HCT116 (cell line): ENCODE measurements at regions of chr3 and their contacts with region 1.

Region 1: DNA sequence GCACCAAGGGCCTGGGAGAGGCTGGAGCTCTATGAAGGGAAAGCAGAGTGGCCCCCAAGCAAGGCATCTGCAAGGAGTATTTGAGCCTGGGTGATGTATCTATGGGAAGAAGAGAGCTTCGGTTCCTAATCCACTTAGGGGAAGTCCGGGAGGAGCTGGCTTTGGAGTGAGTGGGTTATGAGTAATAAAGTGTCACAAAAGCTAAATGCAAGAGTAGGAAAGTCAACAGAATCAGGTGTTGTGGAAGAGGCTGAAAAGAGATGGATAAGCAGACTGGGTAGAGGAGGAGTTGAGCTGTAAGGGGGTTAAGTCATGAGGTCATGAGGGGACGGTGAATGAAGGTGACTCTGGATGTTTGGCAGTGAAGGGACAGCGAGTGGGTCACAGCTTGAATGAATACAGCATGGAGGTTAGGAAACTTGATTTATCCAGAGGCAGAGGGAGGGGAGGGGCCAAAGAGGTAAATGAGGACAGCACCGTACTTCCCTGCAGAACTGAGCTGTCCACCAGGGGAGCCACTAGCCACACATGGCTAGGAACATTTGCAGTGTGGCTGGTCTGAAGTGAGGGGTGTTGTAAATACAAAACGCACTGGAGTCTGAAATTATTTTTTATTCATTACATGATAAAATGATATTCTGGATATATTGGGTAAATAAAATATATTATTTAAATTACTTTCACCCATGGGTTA is 83.3 kb downstream of the ADCY5 start:
- DNase-seq: peak; percentile 33
- ATAC-seq: peak; percentile 99
- H3K4me3 ChIP-seq: no peak overlapping the region
- H3K27ac ChIP-seq: no peak overlapping the region
- H3K4me1 ChIP-seq: peaks cover 0 to 4% of the 10 kb centered on the region in 2 experiments; a peak in 2 of 4 replicates
- H3K27me3 ChIP-seq: no peaks in the 10 kb centered on the region
- CTCF ChIP-seq: peak; percentile 69 to 90 (median 70)
- POLR2A ChIP-seq: no peak
- RAD21 ChIP-seq: peak; percentile 52

Region 2: DNA sequence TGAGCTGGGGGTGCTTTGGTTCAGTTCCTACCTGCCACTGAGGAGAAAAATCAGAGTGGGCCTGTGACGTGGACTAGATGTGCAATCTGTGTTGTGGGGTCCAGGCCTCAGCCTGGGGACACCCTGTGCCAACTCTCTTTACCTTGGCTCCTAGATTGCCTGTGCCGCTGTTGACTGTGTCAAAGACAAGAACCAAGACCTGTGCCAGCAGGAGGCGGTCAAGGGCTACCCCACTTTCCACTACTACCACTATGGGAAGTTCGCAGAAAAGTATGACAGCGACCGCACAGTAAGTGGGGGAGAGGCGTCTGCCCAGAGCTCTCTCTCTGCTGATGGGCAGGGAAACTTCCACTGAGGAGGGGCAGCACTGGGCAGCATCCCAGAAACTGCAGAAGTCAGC is 204.4 kb before region 1 on chr3:
- CTCF ChIA-PET with region 1: no interaction called
- POLR2A ChIA-PET with region 1: no interaction called
- RAD21 ChIA-PET with region 1: no interaction called
- intact Hi-C with region 1: no loop called
- DNase-seq: no peak
- ATAC-seq: peak; percentile 47
- H3K4me3 ChIP-seq: no peak overlapping the region
- H3K27ac ChIP-seq: no peak overlapping the region
- H3K4me1 ChIP-seq: no peaks in the 10 kb centered on the region
- H3K27me3 ChIP-seq: no peaks in the 10 kb centered on the region
- CTCF ChIP-seq: peak in 2 of 3 experiments; percentile 17 to 31; a peak in 2 of 6 replicates
- POLR2A ChIP-seq: no peak
- RAD21 ChIP-seq: 0 out of 2 replicates have a peak, but pooled peaks have one; percentile 7

Region 3: DNA sequence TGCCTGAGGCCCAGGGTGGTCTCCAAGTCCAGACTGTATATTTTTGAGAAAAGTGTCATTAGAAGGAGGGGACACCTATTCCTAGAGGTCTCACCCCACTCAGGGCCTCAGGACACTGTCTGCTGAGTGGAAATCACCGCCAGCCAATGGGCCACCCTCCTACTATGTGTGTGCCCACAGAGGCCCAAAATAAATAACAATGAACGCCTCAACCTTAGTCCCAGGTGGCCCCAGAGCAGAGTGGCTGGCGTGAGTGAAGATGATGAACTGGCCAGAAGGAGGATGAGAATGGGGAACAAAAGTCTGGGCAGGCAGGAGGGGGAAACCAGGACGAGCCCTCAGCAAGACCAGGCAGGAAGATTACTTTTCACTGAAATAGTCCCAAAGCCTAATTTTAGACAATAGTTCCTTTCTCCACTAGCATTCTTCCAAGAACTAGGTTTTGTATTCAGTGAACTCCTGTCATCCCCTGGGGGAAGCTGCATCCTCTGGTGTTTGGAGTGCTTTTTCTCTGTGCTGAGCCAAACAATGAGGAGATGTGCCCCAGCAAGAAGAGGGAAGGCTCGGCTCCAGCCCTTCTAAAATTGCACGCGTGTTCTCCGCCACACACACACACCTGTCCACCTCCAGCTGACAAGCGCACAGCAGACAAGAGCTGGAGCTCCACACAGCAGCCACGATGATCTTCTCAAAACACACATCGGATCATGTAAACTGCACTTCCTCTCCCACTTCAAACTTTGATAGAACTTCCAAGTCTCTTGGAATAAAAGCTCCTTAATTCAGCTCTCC is 11.1 kb after region 1 on chr3:
- CTCF ChIA-PET with region 1: interaction called, 11 read pairs
- POLR2A ChIA-PET with region 1: no interaction called
- RAD21 ChIA-PET with region 1: no interaction called
- intact Hi-C with region 1: no loop called
- DNase-seq: no peak
- ATAC-seq: no peak
- H3K4me3 ChIP-seq: no peak overlapping the region
- H3K27ac ChIP-seq: no peak overlapping the region
- H3K4me1 ChIP-seq: no peaks in the 10 kb centered on the region
- H3K27me3 ChIP-seq: no peaks in the 10 kb centered on the region; the same call in 1 of the 2 replicates
- CTCF ChIP-seq: no peak
- POLR2A ChIP-seq: no peak
- RAD21 ChIP-seq: no peak